Heart right ventricle (tissue), 16 donors: ENCODE measurements at regions of chr1 and their contacts with region 1.

Region 1: GRCh38 chr1:51736702-51737101 is 119.8 kb downstream of the OSBPL9 start:
- DNase-seq: peak in 1 of 2 donors; percentile 36
- ATAC-seq: peak in 5 of 8 donors; percentile 27 to 66 (median 54)
- H3K4me3 ChIP-seq: no peak overlapping the region
- H3K27ac ChIP-seq: peak overlapping the region in 4 of 10 donors; percentile 13 to 71 (median 45)
- H3K4me1 ChIP-seq: peaks cover 4 to 82% (median 59%) of the 10 kb centered on the region in 9 donors
- H3K27me3 ChIP-seq: no peaks in the 10 kb centered on the region
- CTCF ChIP-seq: no peak

Region 2: GRCh38 chr1:51666478-51666877 is 70.2 kb before region 1 on chr1:
- intact Hi-C with region 1: loop called in 2 of 10 experiments (anchors 5 kb)
- DNase-seq: peak in 1 of 2 donors; percentile 22
- ATAC-seq: peak; percentile 41 to 90 (median 78)
- H3K4me3 ChIP-seq: no peak overlapping the region
- H3K27ac ChIP-seq: peak overlapping the region; percentile 2 to 70 (median 53)
- H3K4me1 ChIP-seq: peaks cover 21 to 98% (median 66%) of the 10 kb centered on the region in 9 donors
- H3K27me3 ChIP-seq: no peaks in the 10 kb centered on the region
- CTCF ChIP-seq: no peak

Region 3: DNA sequence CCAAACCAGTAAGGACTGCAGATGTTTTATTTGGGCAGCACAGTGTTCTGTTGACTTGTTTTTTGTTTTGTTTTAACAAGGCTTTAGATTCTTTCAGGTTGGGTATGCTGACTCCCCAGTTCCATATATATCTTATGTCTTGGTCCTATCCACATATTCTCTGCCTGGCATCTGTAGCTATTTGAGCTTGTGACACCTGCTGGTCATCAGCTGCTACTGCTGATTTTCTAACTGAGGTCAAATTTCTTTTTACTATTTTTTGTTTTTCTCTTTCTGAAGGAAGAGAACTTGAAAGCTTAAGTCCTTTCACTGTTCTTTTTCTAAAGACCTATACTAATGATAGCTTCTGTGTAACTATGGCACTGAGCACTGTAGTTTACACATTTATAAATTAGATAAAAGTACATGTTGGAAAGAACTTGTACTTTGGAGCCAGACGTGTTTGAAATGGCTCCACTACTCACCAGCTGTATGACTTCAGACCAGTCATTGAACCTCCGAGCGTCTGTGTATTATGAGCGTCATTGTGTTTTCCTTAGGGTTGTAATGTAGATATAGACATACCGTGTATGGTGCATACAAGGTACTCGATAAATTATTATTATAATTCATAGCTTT is 32.4 kb after region 1 on chr1:
- intact Hi-C with region 1: no loop called
- DNase-seq: no peak
- ATAC-seq: peak; percentile 63 to 83 (median 68)
- H3K4me3 ChIP-seq: no peak overlapping the region
- H3K27ac ChIP-seq: peak overlapping the region in 3 of 10 donors; percentile 15 to 42 (median 16)
- H3K4me1 ChIP-seq: peaks cover 0 to 13% (median 9%) of the 10 kb centered on the region in 9 donors
- H3K27me3 ChIP-seq: no peaks in the 10 kb centered on the region
- CTCF ChIP-seq: peak; percentile 65 to 89 (median 83)

Region 4: GRCh38 chr1:51871351-51871975 is 134.8 kb after region 1 on chr1:
- intact Hi-C with region 1: no loop called
- DNase-seq: no peak
- ATAC-seq: no peak
- H3K4me3 ChIP-seq: no peak overlapping the region
- H3K27ac ChIP-seq: no peak overlapping the region
- H3K4me1 ChIP-seq: peaks cover 0 to 71% (median 40%) of the 10 kb centered on the region in 9 donors
- H3K27me3 ChIP-seq: no peaks in the 10 kb centered on the region
- CTCF ChIP-seq: no peak